Left cardiac atrium (tissue), 4 donors: ENCODE measurements at regions of chr18 and their contacts with region 1.

Region 1: GRCh38 chr18:10851824-10852319 is 297.5 kb downstream of the PIEZO2 start:
- DNase-seq: no peak
- ATAC-seq: peak; percentile 23 to 41

Region 2: DNA sequence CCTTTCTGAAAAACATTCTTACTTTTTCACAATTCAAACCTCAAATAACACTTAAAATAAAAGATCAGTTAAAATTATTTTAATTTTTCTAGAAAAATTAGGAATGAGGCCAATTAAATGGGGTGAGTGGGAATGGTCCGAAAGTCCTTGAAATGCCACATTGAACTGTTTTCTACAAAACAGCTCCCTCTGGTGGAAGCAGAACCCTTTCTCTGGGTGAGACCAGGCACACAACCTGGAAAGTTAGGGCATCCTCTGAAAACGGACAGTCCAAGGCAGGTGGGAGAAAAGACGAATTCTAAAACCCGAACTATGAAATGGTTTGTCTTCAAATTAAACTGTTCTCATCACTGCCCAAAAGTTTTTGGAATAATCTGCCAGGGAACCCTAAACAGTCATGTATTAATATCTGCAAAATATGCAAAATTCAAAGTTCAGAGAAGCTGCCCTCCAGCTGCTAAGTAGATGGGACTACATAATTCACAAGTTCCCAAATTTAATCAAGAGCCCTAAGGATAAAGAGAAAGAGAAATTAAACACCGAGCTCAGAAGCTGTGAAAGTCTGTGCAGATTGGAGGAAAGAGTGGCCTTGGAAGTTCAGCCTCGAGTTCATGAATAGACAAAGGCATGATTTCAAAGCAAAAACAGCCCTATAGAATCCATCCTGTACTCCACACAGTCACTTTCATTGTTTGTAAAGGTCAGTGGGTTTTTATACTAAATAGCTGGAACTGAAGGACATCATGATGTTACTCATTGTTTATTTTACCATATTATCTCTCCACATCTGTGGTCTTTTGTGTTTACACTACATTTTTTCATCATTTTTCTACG is 189.2 kb after region 1 on chr18:
- intact Hi-C with region 1: loop called (anchors 2 to 10 kb)
- DNase-seq: peak; percentile 30
- ATAC-seq: peak; percentile 70 to 73

Region 3: GRCh38 chr18:11149441-11150270 is 297.8 kb after region 1 on chr18 and contains the start of gene PIEZO2:
- intact Hi-C with region 1: loop called (anchors 2 to 10 kb)
- DNase-seq: peak; percentile 67
- ATAC-seq: peak; percentile 81 to 95
- total RNA-seq, gene PIEZO2: 1.7 to 2.1 TPM

Region 4: GRCh38 chr18:11553098-11553940 is 701.4 kb after region 1 on chr18:
- intact Hi-C with region 1: loop called (anchors 2 to 10 kb)
- DNase-seq: no peak
- ATAC-seq: peak; percentile 41 to 65